ENCODE measurements at regions of chr4 and their contacts with region 1.

Region 1: GRCh38 chr4:23680671-23681518 is 209.0 kb downstream of the PPARGC1A start:
- DNase-seq: no peak
- H3K4me3 ChIP-seq: no peak overlapping the region
- H3K27me3 ChIP-seq: no peaks in the 10 kb centered on the region
- CTCF ChIP-seq: no peak

Region 2: GRCh38 chr4:23422878-23423277 is 258.0 kb before region 1 on chr4:
- CTCF ChIA-PET with region 1: no interaction called
- POLR2A ChIA-PET with region 1: no interaction called
- DNase-seq: no peak
- H3K4me3 ChIP-seq: no peak overlapping the region
- H3K27me3 ChIP-seq: no peaks in the 10 kb centered on the region
- CTCF ChIP-seq: no peak

Region 3: GRCh38 chr4:23782778-23783437 is 102.0 kb after region 1 on chr4:
- CTCF ChIA-PET with region 1: no interaction called
- POLR2A ChIA-PET with region 1: no interaction called
- DNase-seq: peak; percentile 36
- H3K4me3 ChIP-seq: no peak overlapping the region
- H3K27me3 ChIP-seq: no peaks in the 10 kb centered on the region
- CTCF ChIP-seq: no peak

Region 4: DNA sequence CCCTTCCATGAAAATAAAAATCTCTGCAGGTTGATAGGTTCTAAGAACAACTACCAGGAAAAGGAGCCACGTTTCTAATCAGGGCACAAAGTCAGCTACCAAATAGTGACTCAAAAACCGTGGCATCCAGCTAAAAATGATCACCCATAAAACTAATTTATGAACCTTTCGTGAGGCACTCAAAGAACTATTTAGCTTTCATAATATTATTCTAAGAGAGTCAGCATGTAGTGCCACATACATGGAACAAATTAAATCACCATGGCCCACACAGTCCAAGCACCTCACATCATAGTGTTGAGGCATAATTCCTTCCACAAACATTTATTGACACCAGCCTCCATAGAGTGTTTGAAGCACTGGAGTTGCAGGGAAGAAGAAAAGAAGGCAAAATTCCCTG is 460.9 kb after region 1 on chr4:
- CTCF ChIA-PET with region 1: no interaction called
- POLR2A ChIA-PET with region 1: interaction called, 13 read pairs
- DNase-seq: peak; percentile 22
- H3K4me3 ChIP-seq: no peak overlapping the region
- H3K27me3 ChIP-seq: no peaks in the 10 kb centered on the region
- CTCF ChIP-seq: no peak

Region 5: GRCh38 chr4:24419181-24420034 is 738.5 kb after region 1 on chr4:
- CTCF ChIA-PET with region 1: interaction called, 15 read pairs
- POLR2A ChIA-PET with region 1: no interaction called
- DNase-seq: peak; percentile 6
- H3K4me3 ChIP-seq: no peak overlapping the region
- H3K27me3 ChIP-seq: no peaks in the 10 kb centered on the region
- CTCF ChIP-seq: peak; percentile 90

Measured in BJ (cell line).